ENCODE measurements at regions of chr13 and their contacts with region 1.

Region 1: DNA sequence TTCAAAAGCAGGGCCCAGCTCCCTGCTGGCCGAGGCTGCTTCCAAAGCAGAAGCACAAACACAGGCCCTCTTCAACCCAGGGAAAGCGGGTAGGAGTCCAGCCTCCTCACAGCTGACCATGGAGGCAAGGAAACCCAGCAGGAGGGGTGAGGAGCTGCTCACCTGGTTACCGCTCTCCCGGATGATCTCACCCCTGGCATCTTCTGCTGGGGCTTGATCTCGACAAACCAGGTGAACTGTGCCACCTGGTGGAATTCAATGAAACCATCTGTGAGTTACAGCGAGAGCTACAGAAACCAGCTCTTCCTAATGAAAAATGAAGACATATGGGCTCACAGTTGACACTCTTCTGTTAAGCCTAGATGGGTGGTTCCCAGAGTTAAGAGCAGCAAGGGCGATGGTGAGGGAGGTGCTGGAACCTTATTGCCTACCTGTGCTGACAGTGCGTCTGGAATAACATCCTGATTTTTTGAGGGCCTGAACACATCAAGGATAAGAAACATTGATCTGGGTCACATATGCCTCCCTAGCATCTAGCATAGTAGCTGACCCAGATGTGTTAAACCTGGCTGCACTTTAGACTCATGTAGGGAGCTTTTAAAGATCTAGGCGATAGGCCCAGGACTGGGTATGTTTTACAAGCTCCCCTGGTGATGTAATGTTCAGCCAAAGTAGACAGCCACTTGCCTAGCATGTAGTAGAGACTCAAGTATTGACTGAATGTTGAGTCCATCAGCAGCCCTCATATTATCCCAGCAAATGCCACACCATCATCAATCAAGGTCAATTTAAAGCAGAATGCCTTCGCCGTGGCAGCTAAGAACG is 6.1 kb downstream of the DHRS12 start:
- DNase-seq: no peak
- ATAC-seq: no peak
- H3K4me3 ChIP-seq: no peak overlapping the region
- H3K27ac ChIP-seq: no peak overlapping the region
- H3K4me1 ChIP-seq: peaks cover 14 to 36% (median 21%) of the 10 kb centered on the region in 9 donors
- H3K27me3 ChIP-seq: no peaks in the 10 kb centered on the region
- CTCF ChIP-seq: peak in 6 of 9 donors; percentile 33 to 52 (median 44)

Region 2: GRCh38 chr13:51435002-51435578 is 362.8 kb before region 1 on chr13:
- intact Hi-C with region 1: loop called in 3 of 10 experiments (anchors 5 to 10 kb)
- DNase-seq: no peak
- ATAC-seq: no peak
- H3K4me3 ChIP-seq: no peak overlapping the region
- H3K27ac ChIP-seq: no peak overlapping the region
- H3K4me1 ChIP-seq: peaks cover 0 to 6% (median 0%) of the 10 kb centered on the region in 9 donors
- H3K27me3 ChIP-seq: no peaks in the 10 kb centered on the region
- CTCF ChIP-seq: peak in 8 of 9 donors; percentile 19 to 72 (median 62)

Region 3: GRCh38 chr13:51444922-51445321 is 353.0 kb before region 1 on chr13:
- intact Hi-C with region 1: loop called in 3 of 10 experiments (anchors 5 to 10 kb)
- DNase-seq: no peak
- ATAC-seq: peak in 1 of 8 donors; percentile 28
- H3K4me3 ChIP-seq: no peak overlapping the region
- H3K27ac ChIP-seq: no peak overlapping the region
- H3K4me1 ChIP-seq: peaks cover 0 to 21% (median 5%) of the 10 kb centered on the region in 9 donors
- H3K27me3 ChIP-seq: no peaks in the 10 kb centered on the region
- CTCF ChIP-seq: peak in 6 of 9 donors; percentile 1 to 57 (median 42)

Measured in heart right ventricle (tissue), 16 donors.